IMR-90 (cell line): ENCODE measurements at regions of chr3 and their contacts with region 1.

Region 1: GRCh38 chr3:138426226-138426625 is 8.2 kb upstream of the ESYT3 start:
- DNase-seq: peak; percentile 38
- ATAC-seq: peak; percentile 62; the same call in 1 of the 2 replicates
- H3K4me3 ChIP-seq: no peak overlapping the region
- H3K27ac ChIP-seq: no peak overlapping the region
- H3K4me1 ChIP-seq: no peaks in the 10 kb centered on the region
- H3K27me3 ChIP-seq: peaks cover 2% of the 10 kb centered on the region; the same call in 1 of the 2 replicates
- CTCF ChIP-seq: peak; percentile 71
- POLR2A ChIP-seq: no peak
- RAD21 ChIP-seq: peak; percentile 77

Region 2: GRCh38 chr3:138124706-138125355 is 301.4 kb before region 1 on chr3:
- CTCF ChIA-PET with region 1: no interaction called
- POLR2A ChIA-PET with region 1: no interaction called
- dilution Hi-C with region 1: no loop called
- in situ Hi-C with region 1: no loop called
- intact Hi-C with region 1: loop called (anchors 5 kb)
- DNase-seq: peak; percentile 80
- ATAC-seq: peak; percentile 85
- H3K4me3 ChIP-seq: no peak overlapping the region
- H3K27ac ChIP-seq: peak overlapping the region; percentile 43
- H3K4me1 ChIP-seq: peaks cover 11% of the 10 kb centered on the region
- H3K27me3 ChIP-seq: no peaks in the 10 kb centered on the region; the same call in 1 of the 2 replicates
- CTCF ChIP-seq: no peak
- POLR2A ChIP-seq: no peak
- RAD21 ChIP-seq: no peak

Region 3: DNA sequence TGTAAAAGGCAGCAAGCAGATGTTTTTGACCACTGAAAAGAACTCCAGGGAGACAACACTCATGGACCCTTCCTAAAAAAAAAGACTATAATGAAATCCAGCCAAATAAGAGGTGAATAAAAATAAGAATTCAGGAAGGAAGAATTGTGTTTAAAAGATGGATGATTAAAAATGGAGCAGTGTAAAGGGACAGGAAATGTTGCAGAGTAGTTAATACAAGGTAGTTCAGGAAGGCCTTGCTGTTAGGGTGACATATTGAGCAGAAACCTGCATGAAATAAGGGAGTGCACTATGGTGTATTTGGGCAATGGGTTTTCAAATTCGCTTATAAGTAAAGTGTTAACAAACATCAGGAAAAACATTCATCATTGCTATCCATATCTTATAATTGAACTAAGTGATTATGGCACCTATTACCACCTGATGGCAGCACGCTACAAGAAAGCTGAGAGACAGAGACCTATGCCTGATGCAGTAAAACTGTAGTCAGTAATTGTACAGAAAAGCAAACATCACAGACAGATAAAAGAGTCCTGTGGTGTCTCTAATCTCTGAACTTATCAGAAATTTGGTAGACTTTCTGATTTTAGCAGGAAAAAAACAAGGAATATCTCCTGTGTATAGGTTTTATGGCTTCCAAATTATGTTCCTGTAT is 245.7 kb before region 1 on chr3:
- CTCF ChIA-PET with region 1: no interaction called
- POLR2A ChIA-PET with region 1: no interaction called
- dilution Hi-C with region 1: no loop called
- in situ Hi-C with region 1: no loop called
- intact Hi-C with region 1: loop called (anchors 2 kb)
- DNase-seq: peak; percentile 47
- ATAC-seq: peak; percentile 84
- H3K4me3 ChIP-seq: no peak overlapping the region
- H3K27ac ChIP-seq: no peak overlapping the region
- H3K4me1 ChIP-seq: no peaks in the 10 kb centered on the region
- H3K27me3 ChIP-seq: peaks cover 6% of the 10 kb centered on the region
- CTCF ChIP-seq: peak; percentile 59
- POLR2A ChIP-seq: no peak
- RAD21 ChIP-seq: peak; percentile 74

Region 4: GRCh38 chr3:138213398-138214085 is 212.7 kb before region 1 on chr3:
- CTCF ChIA-PET with region 1: no interaction called
- POLR2A ChIA-PET with region 1: no interaction called
- dilution Hi-C with region 1: no loop called
- in situ Hi-C with region 1: no loop called
- intact Hi-C with region 1: no loop called
- DNase-seq: peak; percentile 7
- ATAC-seq: no peak
- H3K4me3 ChIP-seq: no peak overlapping the region
- H3K27ac ChIP-seq: no peak overlapping the region
- H3K4me1 ChIP-seq: no peaks in the 10 kb centered on the region; the same call in 1 of the 2 replicates
- H3K27me3 ChIP-seq: no peaks in the 10 kb centered on the region
- CTCF ChIP-seq: no peak
- POLR2A ChIP-seq: no peak
- RAD21 ChIP-seq: no peak

Region 5: GRCh38 chr3:138329127-138329983 is 96.9 kb before region 1 on chr3 and contains the start of gene NME9:
- CTCF ChIA-PET with region 1: interaction called, 3 read pairs
- POLR2A ChIA-PET with region 1: no interaction called
- dilution Hi-C with region 1: no loop called
- in situ Hi-C with region 1: loop called (anchors 5 kb)
- intact Hi-C with region 1: loop called (anchors 1 kb)
- DNase-seq: peak; percentile 73
- ATAC-seq: peak; percentile 97
- H3K4me3 ChIP-seq: peak within 1 kb of the TSS; percentile 62
- H3K27ac ChIP-seq: no peak within 1 kb of the TSS
- H3K4me1 ChIP-seq: no peaks in the 10 kb centered on the region
- H3K27me3 ChIP-seq: peaks cover under 1% of the 10 kb centered on the region
- CTCF ChIP-seq: peak; percentile 50
- POLR2A ChIP-seq: no peak
- RAD21 ChIP-seq: peak; percentile 36
- total RNA-seq, gene NME9: not detected in 2 replicates

Region 6: GRCh38 chr3:138468886-138469285 is 42.7 kb after region 1 on chr3:
- CTCF ChIA-PET with region 1: no interaction called
- POLR2A ChIA-PET with region 1: no interaction called
- dilution Hi-C with region 1: no loop called
- in situ Hi-C with region 1: no loop called
- intact Hi-C with region 1: no loop called
- DNase-seq: no peak
- ATAC-seq: peak; percentile 37; the same call in 1 of the 2 replicates
- H3K4me3 ChIP-seq: no peak overlapping the region
- H3K27ac ChIP-seq: no peak overlapping the region
- H3K4me1 ChIP-seq: no peaks in the 10 kb centered on the region
- H3K27me3 ChIP-seq: peaks cover 9% of the 10 kb centered on the region
- CTCF ChIP-seq: no peak
- POLR2A ChIP-seq: no peak
- RAD21 ChIP-seq: no peak